ENCODE measurements at regions of chr16 and their contacts with region 1.

Region 1: GRCh38 chr16:84459941-84460405 is 44.5 kb downstream of the MEAK7 start:
- DNase-seq: no peak
- H3K4me3 ChIP-seq: no peak overlapping the region
- CTCF ChIP-seq: no peak

Region 2: GRCh38 chr16:84266451-84266850 is 193.5 kb before region 1 on chr16:
- in situ Hi-C with region 1: loop called (anchors 10 kb)
- DNase-seq: no peak
- H3K4me3 ChIP-seq: no peak overlapping the region
- CTCF ChIP-seq: no peak

Region 3: DNA sequence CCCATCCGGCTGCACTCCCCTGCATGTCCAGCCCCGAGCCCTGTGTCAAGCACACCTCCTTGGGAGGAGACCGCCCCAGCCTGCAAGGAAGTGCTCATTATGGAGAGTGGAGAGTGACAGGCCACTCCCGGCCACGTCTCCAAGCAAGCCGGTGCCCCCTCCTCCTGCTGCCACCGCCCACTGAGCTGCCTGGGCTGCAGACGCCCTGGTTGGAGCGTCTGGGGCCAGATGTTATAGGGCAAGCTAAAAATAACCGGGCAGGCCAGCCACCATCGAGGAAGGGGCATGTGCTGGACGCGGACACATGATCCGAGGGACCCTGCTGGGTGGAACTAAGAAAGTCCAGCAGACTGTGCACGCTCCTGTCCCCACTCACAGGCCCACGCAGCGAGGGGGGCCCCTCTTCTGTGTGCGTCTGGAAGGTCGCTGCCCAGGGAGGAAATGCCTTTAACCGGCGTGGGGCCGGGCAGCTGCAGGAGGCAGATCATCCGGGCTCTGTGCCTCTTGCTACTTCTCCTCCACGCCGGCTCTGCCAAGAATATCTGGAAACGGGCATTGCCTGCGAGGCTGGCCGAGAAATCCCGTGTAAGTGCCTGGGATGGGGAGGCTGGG is 165.3 kb before region 1 on chr16 and contains the start of gene WFDC1:
- in situ Hi-C with region 1: loop called (anchors 10 kb)
- DNase-seq: no peak
- H3K4me3 ChIP-seq: no peak within 1 kb of the TSS
- CTCF ChIP-seq: no peak

Measured in astrocyte of the cerebellum (primary cell).